ENCODE measurements at regions of chr3 and their contacts with region 1.

Region 1: DNA sequence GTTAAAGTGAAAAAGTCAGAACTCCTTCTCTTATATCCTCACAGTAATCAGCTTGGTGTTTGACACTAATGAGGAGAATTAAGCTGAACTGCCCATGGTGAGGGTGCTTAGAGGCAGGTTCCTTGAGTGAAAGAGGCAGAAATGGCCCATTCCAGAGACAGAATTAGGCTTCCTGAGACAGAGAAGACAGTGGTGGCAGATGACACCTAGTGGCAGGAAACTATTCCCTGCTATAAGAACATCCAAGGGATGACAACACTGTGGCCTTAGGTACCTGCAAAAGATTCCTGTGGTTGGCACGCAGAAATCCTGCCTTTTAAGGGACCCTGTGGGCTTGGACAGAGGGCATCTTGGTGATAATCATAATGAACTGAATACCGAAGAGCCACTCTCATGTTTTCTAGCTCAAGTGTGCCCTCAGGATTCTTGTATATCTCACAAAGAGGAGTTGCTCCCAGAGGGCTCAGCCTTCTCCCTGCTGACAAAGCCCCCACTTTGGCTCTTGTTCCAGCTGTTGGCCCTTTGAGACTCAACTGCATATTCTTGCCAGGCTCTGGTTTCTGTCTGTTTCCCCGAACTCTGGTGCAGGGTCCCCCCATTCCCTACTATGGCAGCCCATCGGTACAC is 56.0 kb downstream of the KBTBD12 start:
- DNase-seq: peak in 1 of 5 donors; percentile 32
- H3K4me3 ChIP-seq: no peak overlapping the region
- H3K27ac ChIP-seq: no peak overlapping the region
- H3K4me1 ChIP-seq: no peaks in the 10 kb centered on the region
- H3K27me3 ChIP-seq: no peaks in the 10 kb centered on the region
- CTCF ChIP-seq: peak in 2 of 3 donors; percentile 24 to 38
- EP300 ChIP-seq: no peak
- POLR2A ChIP-seq: no peak

Region 2: DNA sequence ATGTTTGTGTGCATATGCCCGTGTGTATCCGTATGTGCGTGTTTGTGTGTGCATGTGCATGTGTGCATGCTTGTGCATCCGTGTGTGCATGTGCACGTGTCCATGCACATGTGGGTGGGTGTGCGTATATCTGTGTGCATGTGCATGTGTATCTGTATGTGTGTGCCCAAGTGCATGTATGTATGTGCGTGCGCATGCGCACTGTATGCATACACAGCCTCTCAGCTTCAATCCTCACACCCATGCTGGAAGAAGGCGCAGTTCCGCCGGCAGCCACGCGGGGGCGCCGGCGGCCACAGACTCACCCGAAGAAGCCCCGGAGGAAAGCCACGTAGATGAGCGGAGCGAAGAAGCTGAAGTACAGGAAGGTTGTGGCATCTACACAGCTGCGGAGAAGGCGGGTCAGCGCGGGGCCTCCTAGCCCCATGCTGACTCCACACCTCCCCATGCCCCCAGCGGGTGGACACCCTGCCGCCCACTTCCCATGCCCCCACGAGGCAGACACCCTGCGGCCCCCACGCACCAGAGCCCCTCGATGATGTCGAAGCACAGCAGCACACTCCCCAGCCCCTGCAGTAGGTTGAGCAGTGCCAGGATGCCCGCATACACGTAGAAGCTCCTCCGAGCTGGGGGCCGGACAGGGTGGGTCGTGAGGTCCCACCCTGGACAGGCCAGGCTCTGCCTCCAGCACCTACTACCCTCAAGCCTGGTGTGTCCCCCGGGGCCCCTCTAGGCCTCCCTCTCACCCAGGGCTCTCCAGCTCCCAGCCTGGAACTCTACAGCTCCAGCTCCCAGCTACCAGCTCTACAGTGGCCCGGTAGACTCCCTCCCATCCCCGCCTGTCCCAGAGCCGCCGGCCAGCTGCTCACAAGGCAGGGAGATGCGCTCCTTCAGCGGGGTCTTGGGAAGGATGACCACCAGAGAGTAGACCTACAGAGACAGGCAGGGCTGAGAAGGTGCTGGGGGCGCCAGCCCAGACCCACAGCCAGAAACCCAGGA is 395.9 kb before region 1 on chr3:
- intact Hi-C with region 1: loop called in 1 of 4 experiments (anchors 5 kb)
- DNase-seq: peak; percentile 80 to 93 (median 85)
- H3K4me3 ChIP-seq: no peak overlapping the region
- H3K27ac ChIP-seq: peak overlapping the region in 1 of 2 donors; percentile 7
- H3K4me1 ChIP-seq: peaks cover 2% of the 10 kb centered on the region
- H3K27me3 ChIP-seq: no peaks in the 10 kb centered on the region
- CTCF ChIP-seq: peak; percentile 89 to 94 (median 91)
- EP300 ChIP-seq: no peak
- POLR2A ChIP-seq: no peak

Region 3: GRCh38 chr3:127652231-127652995 is 318.7 kb before region 1 on chr3:
- intact Hi-C with region 1: loop called in 2 of 4 experiments (anchors 5 to 10 kb)
- DNase-seq: peak in 4 of 5 donors; percentile 42 to 61 (median 50)
- H3K4me3 ChIP-seq: no peak overlapping the region
- H3K27ac ChIP-seq: no peak overlapping the region
- H3K4me1 ChIP-seq: peaks cover 2% of the 10 kb centered on the region
- H3K27me3 ChIP-seq: no peaks in the 10 kb centered on the region
- CTCF ChIP-seq: peak; percentile 51 to 69 (median 61)
- EP300 ChIP-seq: no peak
- POLR2A ChIP-seq: no peak

Region 4: GRCh38 chr3:127959846-127960245 is 11.2 kb before region 1 on chr3:
- intact Hi-C with region 1: no loop called
- DNase-seq: no peak
- H3K4me3 ChIP-seq: no peak overlapping the region
- H3K27ac ChIP-seq: no peak overlapping the region
- H3K4me1 ChIP-seq: no peaks in the 10 kb centered on the region
- H3K27me3 ChIP-seq: no peaks in the 10 kb centered on the region
- CTCF ChIP-seq: no peak
- EP300 ChIP-seq: no peak
- POLR2A ChIP-seq: no peak

Region 5: DNA sequence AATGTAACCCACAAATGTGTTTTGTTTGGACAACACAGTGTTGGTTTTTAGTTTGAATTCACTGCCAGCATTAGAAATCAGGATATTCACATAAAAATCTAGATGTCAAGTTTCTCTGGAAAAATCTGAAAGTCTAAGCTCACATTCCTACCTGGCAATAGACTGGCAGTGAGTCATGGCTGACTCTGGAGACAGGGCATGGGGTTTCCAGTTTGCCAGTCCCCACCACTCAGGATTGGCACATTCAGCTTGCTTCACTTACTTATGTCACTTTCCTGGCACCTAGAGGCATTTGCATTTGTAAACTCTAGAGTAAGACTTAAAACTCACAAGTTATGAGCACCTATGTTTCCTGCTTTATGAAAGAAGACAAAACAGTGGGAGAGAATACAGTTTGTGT is 62.0 kb after region 1 on chr3:
- intact Hi-C with region 1: no loop called
- DNase-seq: no peak
- H3K4me3 ChIP-seq: no peak overlapping the region
- H3K27ac ChIP-seq: no peak overlapping the region
- H3K4me1 ChIP-seq: no peaks in the 10 kb centered on the region
- H3K27me3 ChIP-seq: no peaks in the 10 kb centered on the region
- CTCF ChIP-seq: no peak
- EP300 ChIP-seq: no peak
- POLR2A ChIP-seq: no peak

Region 6: GRCh38 chr3:128051837-128052594 is 80.9 kb after region 1 on chr3 and contains the start of gene SEC61A1:
- intact Hi-C with region 1: no loop called
- DNase-seq: peak; percentile 92 to 97 (median 95)
- H3K4me3 ChIP-seq: peak within 1 kb of the TSS; percentile 98
- H3K27ac ChIP-seq: peak within 1 kb of the TSS in 1 of 2 donors; percentile 83
- H3K4me1 ChIP-seq: peaks cover 11% of the 10 kb centered on the region
- H3K27me3 ChIP-seq: no peaks in the 10 kb centered on the region
- CTCF ChIP-seq: no peak
- EP300 ChIP-seq: no peak
- POLR2A ChIP-seq: peak; percentile 42
- total RNA-seq, gene SEC61A1: 52.3 to 165 (median 121) TPM

Region 7: DNA sequence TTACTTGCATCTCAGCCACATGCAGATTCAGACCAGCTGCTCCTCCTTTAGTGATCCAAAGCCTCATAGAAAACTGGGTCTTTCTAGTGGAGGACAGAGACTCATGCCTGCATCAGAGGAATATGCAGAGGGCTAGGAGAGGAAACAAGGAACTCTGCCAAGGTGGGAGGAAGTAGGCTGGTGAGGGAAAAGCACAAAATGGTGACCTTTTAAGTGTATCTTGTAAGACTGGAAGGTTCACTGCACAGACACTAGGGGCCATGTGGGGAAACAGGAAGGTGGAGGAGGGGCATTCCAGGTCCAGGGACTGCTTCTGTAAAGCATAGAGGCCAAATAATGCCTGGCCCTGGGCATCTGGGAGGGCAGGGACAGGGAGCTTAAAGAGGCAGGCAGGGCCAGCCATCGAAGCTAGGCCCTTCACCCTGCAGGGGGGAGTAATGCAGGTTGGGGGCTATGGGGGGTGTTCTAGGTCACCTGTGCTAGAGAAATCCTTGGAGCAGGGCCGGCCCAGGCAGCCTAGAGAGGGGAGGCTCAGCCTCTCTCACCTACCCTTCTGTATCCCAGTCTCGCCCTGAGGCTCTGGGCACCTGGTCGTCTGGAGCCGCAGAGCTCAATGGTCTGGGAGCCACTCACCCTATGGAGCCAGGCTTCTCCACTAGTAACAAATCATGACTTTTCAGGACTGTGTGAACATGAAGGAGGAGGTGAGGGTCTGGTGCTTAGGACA is 377.9 kb after region 1 on chr3:
- intact Hi-C with region 1: no loop called
- DNase-seq: no peak
- H3K4me3 ChIP-seq: no peak overlapping the region
- H3K27ac ChIP-seq: no peak overlapping the region
- H3K4me1 ChIP-seq: no peaks in the 10 kb centered on the region
- H3K27me3 ChIP-seq: no peaks in the 10 kb centered on the region
- CTCF ChIP-seq: no peak
- EP300 ChIP-seq: no peak
- POLR2A ChIP-seq: no peak